Panc1 (cell line): ENCODE measurements at regions of chr6 and their contacts with region 1.

Region 1: DNA sequence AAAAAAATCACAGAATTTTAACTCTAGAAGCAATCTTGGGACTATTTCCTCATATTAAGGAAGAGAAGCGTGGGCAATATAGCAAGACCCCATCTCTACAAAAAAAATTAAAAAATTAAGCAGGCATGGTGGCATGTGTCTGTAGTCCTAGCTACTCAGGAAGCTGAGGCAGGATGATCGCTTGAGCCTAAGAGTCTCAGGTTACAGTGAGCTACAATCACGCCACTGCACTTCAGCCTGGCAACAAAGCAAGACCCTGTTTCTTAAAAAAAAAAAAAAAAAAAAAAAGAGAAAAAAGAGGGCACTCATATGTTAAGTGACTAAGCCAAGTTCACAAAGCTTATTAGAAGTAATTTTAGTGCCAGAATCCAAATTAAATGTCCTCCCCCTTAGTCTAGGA is 100.8 kb downstream of the SESN1 start:
- DNase-seq: no peak
- ATAC-seq: no peak
- H3K4me3 ChIP-seq: no peak overlapping the region
- H3K27ac ChIP-seq: no peak overlapping the region
- H3K4me1 ChIP-seq: no peaks in the 10 kb centered on the region
- H3K27me3 ChIP-seq: no peaks in the 10 kb centered on the region
- CTCF ChIP-seq: no peak

Region 2: DNA sequence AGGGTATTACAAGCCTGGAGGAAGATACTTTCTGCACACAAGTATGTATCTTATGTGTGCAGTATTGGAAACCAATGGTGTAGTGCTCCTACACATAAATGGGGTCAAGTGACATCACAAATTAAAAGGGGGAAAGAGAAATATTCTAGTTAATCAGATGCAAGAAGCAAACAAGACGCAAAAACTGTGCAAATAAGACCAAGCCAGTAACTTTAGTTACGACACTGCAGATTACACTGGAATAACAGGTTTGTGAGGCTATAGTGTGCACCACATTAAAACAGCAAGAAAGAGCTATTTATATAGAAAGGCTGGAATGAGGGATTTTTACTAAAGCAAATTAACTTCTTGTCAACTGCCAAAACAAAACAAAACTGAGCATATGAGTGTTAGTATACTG is 782.2 kb before region 1 on chr6:
- CTCF ChIA-PET with region 1: no interaction called
- POLR2A ChIA-PET with region 1: interaction called, 14 read pairs
- in situ Hi-C with region 1: no loop called
- intact Hi-C with region 1: no loop called
- DNase-seq: no peak
- ATAC-seq: no peak
- H3K4me3 ChIP-seq: no peak overlapping the region
- H3K27ac ChIP-seq: no peak overlapping the region
- H3K4me1 ChIP-seq: no peaks in the 10 kb centered on the region
- H3K27me3 ChIP-seq: no peaks in the 10 kb centered on the region
- CTCF ChIP-seq: no peak

Region 3: GRCh38 chr6:108862479-108863191 is 131.2 kb before region 1 on chr6:
- CTCF ChIA-PET with region 1: no interaction called
- POLR2A ChIA-PET with region 1: no interaction called
- in situ Hi-C with region 1: no loop called
- intact Hi-C with region 1: no loop called
- DNase-seq: no peak
- ATAC-seq: no peak
- H3K4me3 ChIP-seq: no peak overlapping the region
- H3K27ac ChIP-seq: no peak overlapping the region
- H3K4me1 ChIP-seq: no peaks in the 10 kb centered on the region
- H3K27me3 ChIP-seq: no peaks in the 10 kb centered on the region
- CTCF ChIP-seq: no peak